Activated T-helper 2 cell treated with anti-CD3 and anti-CD28 coated beads, Interferon-gamma antibody, Interleukin-2, Interleukin-4, amounts not matched to agents 10 μg/mL and 5 μg/mL and 100 μg/mL, durations not matched to agents 14 hours and 24 hours and 36 hours (primary cell): ENCODE measurements at regions of chr5 and their contacts with region 1.

Region 1: GRCh38 chr5:68261569-68262065 is 46.1 kb downstream of the PIK3R1 start:
- DNase-seq: no peak
- H3K4me3 Mint-ChIP-seq: no peak overlapping the region
- H3K27ac Mint-ChIP-seq: no peak overlapping the region
- H3K4me1 Mint-ChIP-seq: peaks cover 73% of the 10 kb centered on the region
- H3K27me3 Mint-ChIP-seq: no peaks in the 10 kb centered on the region

Region 2: GRCh38 chr5:67516948-67517565 is 744.6 kb before region 1 on chr5:
- intact Hi-C with region 1: loop called (anchors 10 kb)
- DNase-seq: no peak
- H3K4me3 Mint-ChIP-seq: no peak overlapping the region
- H3K27ac Mint-ChIP-seq: no peak overlapping the region
- H3K4me1 Mint-ChIP-seq: peaks cover 21% of the 10 kb centered on the region
- H3K27me3 Mint-ChIP-seq: peaks cover 11% of the 10 kb centered on the region

Region 3: GRCh38 chr5:68041293-68041692 is 220.3 kb before region 1 on chr5:
- intact Hi-C with region 1: no loop called
- DNase-seq: no peak
- H3K4me3 Mint-ChIP-seq: no peak overlapping the region
- H3K27ac Mint-ChIP-seq: no peak overlapping the region
- H3K4me1 Mint-ChIP-seq: no peaks in the 10 kb centered on the region
- H3K27me3 Mint-ChIP-seq: no peaks in the 10 kb centered on the region

Region 4: GRCh38 chr5:68306361-68307014 is 44.9 kb after region 1 on chr5:
- intact Hi-C with region 1: no loop called
- DNase-seq: no peak
- H3K4me3 Mint-ChIP-seq: no peak overlapping the region
- H3K27ac Mint-ChIP-seq: no peak overlapping the region
- H3K4me1 Mint-ChIP-seq: peaks cover 32% of the 10 kb centered on the region
- H3K27me3 Mint-ChIP-seq: peaks cover 10% of the 10 kb centered on the region

Region 5: DNA sequence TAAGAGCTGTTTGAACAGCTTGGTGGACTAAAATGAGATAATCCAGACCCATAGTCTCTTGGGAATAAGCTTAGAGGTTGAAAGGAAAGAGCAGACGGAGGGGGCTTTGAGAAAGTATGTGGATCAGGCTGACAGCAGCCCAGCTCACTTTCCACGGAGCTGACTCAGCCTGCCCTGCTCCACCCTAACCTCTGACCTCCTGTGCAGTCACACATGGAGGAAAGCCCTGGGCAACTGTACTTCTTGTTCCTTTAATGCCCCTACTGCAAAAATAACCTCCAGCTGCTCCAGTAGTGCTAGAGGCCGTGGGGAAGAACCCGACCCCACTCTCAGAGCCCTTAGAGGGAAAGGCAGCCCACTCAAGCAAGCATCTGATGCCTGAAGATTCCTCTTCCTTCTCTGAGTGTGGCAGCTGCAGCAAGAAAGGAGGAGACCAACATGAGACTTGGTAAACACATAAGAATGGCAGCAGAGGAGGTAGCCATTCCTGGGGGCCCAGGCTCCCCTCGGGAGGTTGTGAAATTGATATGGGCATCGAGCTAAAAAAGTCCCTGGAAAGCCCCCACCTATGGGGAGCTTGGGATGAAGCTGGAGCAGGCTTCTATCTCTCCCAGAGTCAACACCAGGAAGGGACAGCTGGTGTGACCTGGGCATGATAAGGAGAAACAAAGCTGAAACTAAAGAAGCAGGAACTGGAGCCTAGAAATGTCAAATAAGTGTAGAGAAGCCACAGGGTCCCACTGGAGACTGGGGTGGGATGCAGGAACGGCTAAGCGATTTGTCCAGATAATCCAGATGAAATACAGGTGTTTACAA is 158.2 kb after region 1 on chr5:
- intact Hi-C with region 1: no loop called
- DNase-seq: no peak
- H3K4me3 Mint-ChIP-seq: no peak overlapping the region
- H3K27ac Mint-ChIP-seq: no peak overlapping the region
- H3K4me1 Mint-ChIP-seq: peaks cover 48% of the 10 kb centered on the region
- H3K27me3 Mint-ChIP-seq: peaks cover 22% of the 10 kb centered on the region